T-cell (primary cell): ENCODE measurements at regions of chr5 and their contacts with region 1.

Region 1: DNA sequence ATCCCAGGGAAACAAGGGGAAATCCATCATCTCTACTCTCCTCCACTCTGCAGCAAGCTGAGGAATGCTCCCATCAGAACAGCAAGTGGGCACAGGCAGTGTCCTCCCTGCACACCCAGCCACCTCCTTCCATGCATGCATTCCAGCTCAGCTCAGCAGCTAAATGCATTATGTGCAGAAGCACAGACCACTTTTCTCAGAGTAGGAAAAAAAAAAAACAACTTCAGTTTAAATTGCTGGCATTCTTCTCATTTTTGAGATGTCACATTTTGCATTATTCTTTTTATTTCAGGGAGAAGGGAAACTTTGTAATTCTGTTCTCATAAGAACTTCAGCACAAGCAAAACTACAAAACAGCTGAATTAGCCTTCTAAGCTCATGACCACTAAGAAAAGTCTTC is 312.2 kb downstream of the SEMA5A start:
- DNase-seq: no peak
- ATAC-seq: no peak
- H3K4me3 ChIP-seq: no peak overlapping the region
- H3K4me3 Mint-ChIP-seq: no peak overlapping the region
- H3K27ac ChIP-seq: no peak overlapping the region
- H3K27ac Mint-ChIP-seq: no peak overlapping the region
- H3K4me1 ChIP-seq: no peaks in the 10 kb centered on the region
- H3K4me1 Mint-ChIP-seq: no peaks in the 10 kb centered on the region
- H3K27me3 ChIP-seq: no peaks in the 10 kb centered on the region
- H3K27me3 Mint-ChIP-seq: no peaks in the 10 kb centered on the region

Region 2: DNA sequence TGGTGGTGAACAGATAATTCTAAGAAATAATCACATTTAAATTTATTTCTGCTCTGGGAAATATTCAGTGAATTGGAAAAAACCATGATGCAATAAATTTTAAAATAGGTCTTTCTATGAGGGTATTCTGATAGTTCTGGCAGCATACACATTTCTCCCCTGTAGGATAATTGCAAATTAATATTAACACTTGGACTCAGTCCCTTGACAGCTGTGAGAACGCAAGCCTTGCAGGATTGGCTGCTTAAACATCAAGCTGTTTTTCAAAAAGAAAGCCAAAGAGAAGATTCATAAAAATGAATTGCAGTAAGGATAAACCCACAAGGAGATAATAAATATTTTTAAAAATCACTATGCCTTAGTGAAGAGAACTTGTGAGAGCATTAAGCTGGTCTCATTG is 1184.8 kb before region 1 on chr5:
- CTCF ChIA-PET with region 1: no interaction called
- POLR2A ChIA-PET with region 1: no interaction called
- DNase-seq: no peak
- ATAC-seq: no peak
- H3K4me3 ChIP-seq: no peak overlapping the region
- H3K4me3 Mint-ChIP-seq: no peak overlapping the region
- H3K27ac ChIP-seq: no peak overlapping the region
- H3K27ac Mint-ChIP-seq: no peak overlapping the region
- H3K4me1 ChIP-seq: no peaks in the 10 kb centered on the region
- H3K4me1 Mint-ChIP-seq: no peaks in the 10 kb centered on the region
- H3K27me3 ChIP-seq: no peaks in the 10 kb centered on the region
- H3K27me3 Mint-ChIP-seq: no peaks in the 10 kb centered on the region

Region 3: GRCh38 chr5:8870959-8871355 is 362.8 kb before region 1 on chr5:
- CTCF ChIA-PET with region 1: no interaction called
- POLR2A ChIA-PET with region 1: no interaction called
- DNase-seq: no peak
- ATAC-seq: no peak
- H3K4me3 ChIP-seq: no peak overlapping the region
- H3K4me3 Mint-ChIP-seq: no peak overlapping the region
- H3K27ac ChIP-seq: no peak overlapping the region
- H3K27ac Mint-ChIP-seq: no peak overlapping the region
- H3K4me1 ChIP-seq: no peaks in the 10 kb centered on the region
- H3K4me1 Mint-ChIP-seq: no peaks in the 10 kb centered on the region
- H3K27me3 ChIP-seq: no peaks in the 10 kb centered on the region
- H3K27me3 Mint-ChIP-seq: no peaks in the 10 kb centered on the region

Region 4: DNA sequence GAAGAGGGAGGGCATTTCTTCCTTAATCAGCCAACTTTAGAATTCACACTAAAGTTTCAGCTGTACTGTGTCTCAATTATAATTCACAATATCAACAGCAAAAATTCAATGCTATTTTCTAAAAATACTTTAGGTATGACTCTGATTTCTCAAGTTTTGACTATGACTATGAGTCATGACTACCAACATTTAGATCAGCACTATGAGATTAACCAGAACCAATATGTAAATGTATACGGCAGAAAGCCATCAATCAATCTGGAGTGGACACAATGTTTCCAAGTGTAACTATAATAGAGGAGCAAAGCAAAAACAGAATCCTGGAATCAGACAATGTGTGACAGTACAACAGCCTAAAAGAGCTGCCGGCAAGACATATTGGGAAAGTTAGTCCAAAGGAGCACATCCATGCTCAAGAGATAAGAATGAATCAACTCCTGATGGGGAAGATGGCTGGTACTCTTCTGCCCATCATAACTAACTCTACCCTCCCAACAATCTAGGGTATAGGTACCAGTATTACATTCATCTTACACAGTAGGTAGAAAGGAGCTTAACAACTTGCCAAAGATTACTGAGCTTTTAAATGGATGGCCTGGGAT is 17.8 kb after region 1 on chr5:
- CTCF ChIA-PET with region 1: no interaction called
- POLR2A ChIA-PET with region 1: interaction called in 1 of 2 experiments, 10 read pairs
- DNase-seq: no peak
- ATAC-seq: no peak
- H3K4me3 ChIP-seq: no peak overlapping the region
- H3K4me3 Mint-ChIP-seq: no peak overlapping the region
- H3K27ac ChIP-seq: no peak overlapping the region
- H3K27ac Mint-ChIP-seq: no peak overlapping the region
- H3K4me1 ChIP-seq: no peaks in the 10 kb centered on the region
- H3K4me1 Mint-ChIP-seq: no peaks in the 10 kb centered on the region
- H3K27me3 ChIP-seq: no peaks in the 10 kb centered on the region
- H3K27me3 Mint-ChIP-seq: no peaks in the 10 kb centered on the region

Region 5: DNA sequence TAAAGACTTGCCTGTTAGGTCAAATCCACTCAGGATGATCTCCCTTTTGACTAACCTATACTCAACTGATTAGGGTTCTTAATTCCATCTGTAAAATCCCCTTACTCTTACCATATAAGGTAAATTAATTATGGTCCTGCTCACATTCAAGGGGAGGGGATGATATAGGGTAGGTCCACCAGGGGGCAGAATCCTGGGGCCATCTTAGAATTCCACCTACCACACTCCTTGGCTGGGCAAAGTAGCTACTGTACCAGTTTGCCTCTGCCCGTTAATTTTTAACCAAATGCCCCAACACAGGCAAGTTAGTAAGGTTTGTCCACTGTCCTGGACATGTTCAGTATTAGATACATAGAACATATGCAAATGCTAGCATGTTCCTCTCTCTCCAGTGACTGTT is 49.8 kb after region 1 on chr5:
- CTCF ChIA-PET with region 1: no interaction called
- POLR2A ChIA-PET with region 1: no interaction called
- DNase-seq: no peak
- ATAC-seq: no peak
- H3K4me3 ChIP-seq: no peak overlapping the region
- H3K4me3 Mint-ChIP-seq: no peak overlapping the region
- H3K27ac ChIP-seq: no peak overlapping the region
- H3K27ac Mint-ChIP-seq: no peak overlapping the region
- H3K4me1 ChIP-seq: no peaks in the 10 kb centered on the region
- H3K4me1 Mint-ChIP-seq: no peaks in the 10 kb centered on the region
- H3K27me3 ChIP-seq: no peaks in the 10 kb centered on the region
- H3K27me3 Mint-ChIP-seq: no peaks in the 10 kb centered on the region